ENCODE measurements at regions of chr12 and their contacts with region 1.

Region 1: DNA sequence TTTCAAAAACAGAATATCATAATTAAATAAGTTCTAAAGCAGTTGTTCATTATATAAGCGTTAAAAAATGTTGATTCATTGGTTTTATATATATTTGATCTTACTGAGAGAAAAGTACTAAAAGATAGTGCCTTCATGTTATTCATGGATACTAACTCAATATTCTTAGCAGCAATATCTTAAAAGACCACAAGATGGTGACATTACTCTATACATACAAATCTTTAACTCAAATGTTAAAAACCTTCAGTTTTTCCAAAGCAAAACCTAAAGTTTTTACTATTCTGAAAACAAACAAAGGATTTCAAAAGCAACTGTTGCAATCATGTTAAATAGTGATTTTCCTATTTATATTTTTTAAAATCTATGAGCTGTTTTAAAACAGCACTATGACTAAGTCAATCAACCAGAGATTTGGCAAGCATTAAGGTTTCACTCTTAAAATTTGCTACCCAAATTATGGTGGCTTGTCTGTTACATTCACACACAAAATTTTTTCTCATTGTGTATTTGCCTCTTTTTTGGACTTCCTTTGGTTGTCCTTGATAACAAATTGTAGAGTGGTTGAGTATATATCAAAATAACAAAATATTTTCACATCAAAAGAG is 50.1 kb upstream of the RERGL start:
- DNase-seq: no peak
- H3K4me3 ChIP-seq: no peak overlapping the region
- H3K4me3 Mint-ChIP-seq: no peak overlapping the region
- H3K27ac Mint-ChIP-seq: no peak overlapping the region
- H3K4me1 ChIP-seq: no peaks in the 10 kb centered on the region
- H3K4me1 Mint-ChIP-seq: no peaks in the 10 kb centered on the region
- H3K27me3 ChIP-seq: no peaks in the 10 kb centered on the region
- H3K27me3 Mint-ChIP-seq: peaks cover 3% of the 10 kb centered on the region
- CTCF ChIP-seq: peak; percentile 51 to 77

Region 2: GRCh38 chr12:18158774-18159557 is 18.9 kb after region 1 on chr12:
- CTCF ChIA-PET with region 1: no interaction called
- POLR2A ChIA-PET with region 1: no interaction called
- intact Hi-C with region 1: loop called (anchors 1 kb)
- DNase-seq: peak in 1 of 2 experiments; percentile 70
- H3K4me3 ChIP-seq: no peak overlapping the region
- H3K4me3 Mint-ChIP-seq: no peak overlapping the region
- H3K27ac Mint-ChIP-seq: no peak overlapping the region
- H3K4me1 ChIP-seq: no peaks in the 10 kb centered on the region
- H3K4me1 Mint-ChIP-seq: no peaks in the 10 kb centered on the region
- H3K27me3 ChIP-seq: no peaks in the 10 kb centered on the region
- H3K27me3 Mint-ChIP-seq: no peaks in the 10 kb centered on the region
- CTCF ChIP-seq: peak; percentile 90 to 95

Region 3: GRCh38 chr12:18224745-18225144 is 84.7 kb after region 1 on chr12:
- CTCF ChIA-PET with region 1: interaction called, 5 read pairs
- POLR2A ChIA-PET with region 1: no interaction called
- intact Hi-C with region 1: loop called (anchors 1 kb)
- DNase-seq: peak in 1 of 2 experiments; percentile 15
- H3K4me3 ChIP-seq: no peak overlapping the region
- H3K4me3 Mint-ChIP-seq: no peak overlapping the region
- H3K27ac Mint-ChIP-seq: no peak overlapping the region
- H3K4me1 ChIP-seq: no peaks in the 10 kb centered on the region
- H3K4me1 Mint-ChIP-seq: no peaks in the 10 kb centered on the region
- H3K27me3 ChIP-seq: no peaks in the 10 kb centered on the region
- H3K27me3 Mint-ChIP-seq: peaks cover 3% of the 10 kb centered on the region
- CTCF ChIP-seq: peak; percentile 47 to 54

Region 4: DNA sequence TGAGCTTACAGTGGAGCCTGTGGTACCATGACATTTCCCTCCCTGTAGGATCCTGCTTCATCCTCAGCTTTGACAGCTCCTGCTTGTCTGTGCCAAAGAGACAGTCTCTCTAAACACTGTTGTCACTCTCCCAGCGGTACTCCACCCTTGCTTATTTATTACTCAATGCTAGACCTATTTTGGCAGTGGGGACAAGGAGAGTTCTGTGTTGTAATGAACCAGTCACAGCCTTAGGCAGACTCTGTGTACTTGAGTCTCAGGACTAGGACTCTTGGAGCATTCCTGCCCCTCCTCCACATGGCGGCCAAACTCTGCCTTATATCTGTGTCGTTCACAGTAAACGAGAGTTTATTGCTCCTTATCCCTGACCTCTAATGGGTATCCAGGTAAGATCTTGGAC is 192.1 kb after region 1 on chr12:
- CTCF ChIA-PET with region 1: no interaction called
- POLR2A ChIA-PET with region 1: no interaction called
- intact Hi-C with region 1: no loop called
- DNase-seq: no peak
- H3K4me3 ChIP-seq: no peak overlapping the region
- H3K4me3 Mint-ChIP-seq: no peak overlapping the region
- H3K27ac Mint-ChIP-seq: no peak overlapping the region
- H3K4me1 ChIP-seq: no peaks in the 10 kb centered on the region
- H3K4me1 Mint-ChIP-seq: no peaks in the 10 kb centered on the region
- H3K27me3 ChIP-seq: no peaks in the 10 kb centered on the region
- H3K27me3 Mint-ChIP-seq: peaks cover 7% of the 10 kb centered on the region
- CTCF ChIP-seq: no peak

Measured in Caco-2 (cell line).